CD8-positive, alpha-beta T cell (primary cell): ENCODE measurements at regions of chr4 and their contacts with region 1.

Region 1: GRCh38 chr4:10123227-10124101 is 6.9 kb upstream of the WDR1 start:
- DNase-seq: peak in 6 of 9 experiments; percentile 22 to 65 (median 34)
- ATAC-seq: peak; percentile 29
- H3K4me3 ChIP-seq: no peak overlapping the region
- H3K4me3 Mint-ChIP-seq: peak overlapping the region; percentile 32
- H3K27ac ChIP-seq: no peak overlapping the region
- H3K27ac Mint-ChIP-seq: peak overlapping the region; percentile 64
- H3K4me1 ChIP-seq: peaks cover 44% of the 10 kb centered on the region
- H3K4me1 Mint-ChIP-seq: peaks cover 51% of the 10 kb centered on the region
- H3K27me3 ChIP-seq: no peaks in the 10 kb centered on the region
- H3K27me3 Mint-ChIP-seq: no peaks in the 10 kb centered on the region
- CTCF ChIP-seq: no peak

Region 2: GRCh38 chr4:10079912-10080588 is 43.4 kb before region 1 on chr4:
- CTCF ChIA-PET with region 1: interaction called, 4 read pairs
- POLR2A ChIA-PET with region 1: no interaction called
- intact Hi-C with region 1: loop called (anchors 5 kb)
- DNase-seq: no peak
- ATAC-seq: no peak
- H3K4me3 ChIP-seq: no peak overlapping the region
- H3K4me3 Mint-ChIP-seq: no peak overlapping the region
- H3K27ac ChIP-seq: no peak overlapping the region
- H3K27ac Mint-ChIP-seq: no peak overlapping the region
- H3K4me1 ChIP-seq: no peaks in the 10 kb centered on the region
- H3K4me1 Mint-ChIP-seq: peaks cover 2% of the 10 kb centered on the region
- H3K27me3 ChIP-seq: no peaks in the 10 kb centered on the region
- H3K27me3 Mint-ChIP-seq: no peaks in the 10 kb centered on the region
- CTCF ChIP-seq: no peak